OCI-LY7 (cell line): ENCODE measurements at regions of chr20 and their contacts with region 1.

Region 1: GRCh38 chr20:50120897-50121693 is 8.1 kb upstream of the UBE2V1 start:
- DNase-seq: peak; percentile 54
- H3K4me3 ChIP-seq: no peak overlapping the region
- H3K27ac ChIP-seq: no peak overlapping the region
- H3K4me1 ChIP-seq: peaks cover 5% of the 10 kb centered on the region
- CTCF ChIP-seq: peak; percentile 74

Region 2: GRCh38 chr20:50165684-50166554 is 44.8 kb after region 1 on chr20:
- CTCF ChIA-PET with region 1: interaction called, 4 read pairs
- POLR2A ChIA-PET with region 1: interaction called, 3 read pairs
- intact Hi-C with region 1: loop called (anchors 1 kb)
- DNase-seq: no peak
- H3K4me3 ChIP-seq: no peak overlapping the region
- H3K27ac ChIP-seq: no peak overlapping the region
- H3K4me1 ChIP-seq: no peaks in the 10 kb centered on the region
- CTCF ChIP-seq: no peak

Region 3: GRCh38 chr20:50179507-50180016 is 58.5 kb after region 1 on chr20:
- CTCF ChIA-PET with region 1: no interaction called
- POLR2A ChIA-PET with region 1: no interaction called
- intact Hi-C with region 1: loop called (anchors 2 kb)
- DNase-seq: no peak
- H3K4me3 ChIP-seq: no peak overlapping the region
- H3K27ac ChIP-seq: no peak overlapping the region
- H3K4me1 ChIP-seq: no peaks in the 10 kb centered on the region
- CTCF ChIP-seq: no peak

Region 4: GRCh38 chr20:50208085-50208491 is 87.0 kb after region 1 on chr20:
- CTCF ChIA-PET with region 1: no interaction called
- POLR2A ChIA-PET with region 1: no interaction called
- intact Hi-C with region 1: no loop called
- DNase-seq: no peak
- H3K4me3 ChIP-seq: no peak overlapping the region
- H3K27ac ChIP-seq: no peak overlapping the region
- H3K4me1 ChIP-seq: no peaks in the 10 kb centered on the region
- CTCF ChIP-seq: no peak